ENCODE measurements at regions of chr19 and their contacts with region 1.

Region 1: GRCh38 chr19:36573020-36573885 is at the start of gene ZNF529:
- DNase-seq: peak; percentile 91 to 92
- H3K4me3 ChIP-seq: peak within 1 kb of the TSS; percentile 84 to 94
- H3K27ac ChIP-seq: peak within 1 kb of the TSS; percentile 87 to 88
- H3K4me1 ChIP-seq: peaks cover 3 to 23% (median 16%) of the 10 kb centered on the region in 4 donors
- H3K27me3 ChIP-seq: no peaks in the 10 kb centered on the region
- CTCF ChIP-seq: no peak

Region 2: GRCh38 chr19:36483653-36484052 is 89.6 kb before region 1 on chr19:
- intact Hi-C with region 1: no loop called
- DNase-seq: no peak
- H3K4me3 ChIP-seq: no peak overlapping the region
- H3K27ac ChIP-seq: no peak overlapping the region
- H3K4me1 ChIP-seq: peaks cover 0 to 15% (median 6%) of the 10 kb centered on the region in 4 donors
- H3K27me3 ChIP-seq: no peaks in the 10 kb centered on the region
- CTCF ChIP-seq: no peak

Region 3: DNA sequence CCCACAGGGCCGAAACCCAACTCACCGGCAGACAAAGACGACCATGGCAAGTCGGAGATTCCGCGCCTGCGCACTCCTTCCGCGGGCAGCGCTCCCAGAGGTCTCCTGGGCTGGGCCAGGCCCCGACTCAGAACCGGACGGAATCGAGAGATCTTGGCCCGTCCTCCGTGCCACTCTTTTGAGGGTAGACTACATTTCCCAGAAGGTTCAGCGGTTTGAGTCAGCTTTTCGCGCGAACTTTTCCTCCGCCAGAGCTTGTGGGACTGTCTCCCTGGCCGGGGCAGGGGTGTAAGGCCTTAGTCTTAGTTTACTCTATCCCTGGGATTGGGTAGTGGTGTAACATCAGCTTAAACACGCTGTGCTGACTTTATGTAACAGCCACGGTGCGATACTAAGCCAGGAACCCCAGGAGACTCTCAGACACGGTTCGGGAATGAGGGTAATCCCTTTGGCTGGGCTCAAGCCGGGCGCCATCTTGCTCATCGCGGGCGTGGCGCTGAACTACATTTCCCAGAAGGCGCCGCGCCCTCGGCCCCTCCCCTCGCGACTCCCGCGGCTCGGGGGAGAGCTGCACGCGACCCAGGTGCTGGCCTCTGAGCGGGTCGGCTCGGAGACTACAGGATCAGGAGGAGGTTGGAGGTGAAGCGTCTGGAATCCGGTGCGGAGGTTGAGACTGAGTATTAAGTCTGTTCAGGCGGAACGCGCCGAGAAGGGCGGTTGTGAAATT is 44.9 kb before region 1 on chr19 and contains the start of gene ZNF260:
- intact Hi-C with region 1: loop called (anchors 2 kb)
- DNase-seq: peak; percentile 97 to 98
- H3K4me3 ChIP-seq: peak within 1 kb of the TSS; percentile 63 to 73
- H3K27ac ChIP-seq: peak within 1 kb of the TSS; percentile 79 to 92
- H3K4me1 ChIP-seq: peaks cover 0 to 22% (median 16%) of the 10 kb centered on the region in 4 donors
- H3K27me3 ChIP-seq: no peaks in the 10 kb centered on the region
- CTCF ChIP-seq: no peak

Region 4: DNA sequence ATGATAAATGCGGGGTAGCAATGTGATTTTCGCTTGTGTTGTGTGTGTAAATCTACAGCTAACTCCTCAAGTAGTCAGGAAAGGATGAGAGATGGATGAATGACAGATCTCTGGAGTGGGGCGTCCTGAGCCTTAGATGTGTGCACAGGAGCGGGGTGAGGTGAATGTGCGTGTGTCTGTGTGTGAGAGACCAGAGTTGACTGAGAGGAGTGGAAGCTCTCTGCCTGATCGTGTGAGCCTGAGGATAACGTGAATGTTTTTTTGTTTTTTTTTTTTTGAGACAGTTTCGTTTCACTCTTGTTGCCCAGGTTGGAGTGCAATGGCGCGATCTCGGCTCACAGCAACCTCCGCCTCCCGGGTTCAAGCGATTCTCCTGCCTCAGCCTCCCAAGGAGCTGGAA is 92.6 kb after region 1 on chr19:
- intact Hi-C with region 1: loop called (anchors 10 kb)
- DNase-seq: no peak
- H3K4me3 ChIP-seq: peak overlapping the region; percentile 84 to 93
- H3K27ac ChIP-seq: no peak overlapping the region
- H3K4me1 ChIP-seq: peaks cover 0 to 20% (median 8%) of the 10 kb centered on the region in 4 donors
- H3K27me3 ChIP-seq: no peaks in the 10 kb centered on the region
- CTCF ChIP-seq: no peak

Region 5: DNA sequence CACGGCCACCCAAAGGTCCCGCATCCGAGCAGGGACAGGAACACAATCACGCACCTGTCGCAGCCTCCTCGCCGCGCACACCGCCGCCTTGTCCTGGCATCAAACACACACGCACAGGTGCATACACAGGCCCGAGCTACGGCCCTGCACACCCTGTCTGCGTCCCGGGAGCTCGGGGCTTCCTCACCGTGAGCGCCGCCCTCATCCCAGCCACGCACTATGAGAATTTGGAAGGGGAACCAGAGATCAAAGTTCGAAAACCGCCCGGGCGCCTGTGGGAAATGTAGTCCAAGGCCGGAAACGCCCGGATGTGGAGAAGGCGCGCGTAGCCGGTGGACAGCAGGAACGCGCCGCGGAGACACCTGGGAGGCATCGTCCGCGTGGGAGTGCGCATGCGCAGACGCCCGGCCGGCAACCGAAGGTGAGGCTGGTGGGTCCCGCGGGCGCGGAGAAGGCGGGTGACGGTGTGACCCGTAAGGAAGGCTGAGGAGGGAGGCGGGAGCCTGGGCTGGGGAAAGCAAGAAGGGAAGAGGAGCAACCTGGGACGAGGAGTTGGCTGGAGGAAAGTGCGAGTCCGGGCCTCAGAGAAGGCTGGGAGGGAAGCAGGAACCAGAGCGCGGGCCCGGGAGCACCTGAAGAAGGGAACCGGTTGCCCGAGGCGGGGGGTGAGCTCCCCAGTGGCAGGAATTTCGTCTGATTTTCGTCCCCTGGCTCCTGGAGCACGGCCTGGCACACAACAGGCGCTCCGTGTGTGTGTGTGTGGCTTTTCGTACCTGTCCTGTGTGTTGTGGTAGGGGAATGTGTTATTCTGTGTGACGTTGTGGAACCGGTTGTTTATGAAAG is 114.2 kb after region 1 on chr19 and contains the start of gene ZNF567:
- intact Hi-C with region 1: no loop called
- DNase-seq: peak; percentile 98 to 99
- H3K4me3 ChIP-seq: peak within 1 kb of the TSS; percentile 73 to 88
- H3K27ac ChIP-seq: peak within 1 kb of the TSS; percentile 75 to 82
- H3K4me1 ChIP-seq: peaks cover 0 to 20% (median 17%) of the 10 kb centered on the region in 4 donors
- H3K27me3 ChIP-seq: no peaks in the 10 kb centered on the region
- CTCF ChIP-seq: no peak